Panc1 (cell line): ENCODE measurements at regions of chr9 and their contacts with region 1.

Region 1: GRCh38 chr9:29439961-29440360 is 1866.7 kb upstream of the C9orf72 start:
- DNase-seq: no peak
- ATAC-seq: no peak
- H3K4me3 ChIP-seq: no peak overlapping the region
- H3K27ac ChIP-seq: no peak overlapping the region
- H3K4me1 ChIP-seq: no peaks in the 10 kb centered on the region
- H3K27me3 ChIP-seq: no peaks in the 10 kb centered on the region
- CTCF ChIP-seq: no peak

Region 2: GRCh38 chr9:28249424-28249823 is 1190.5 kb before region 1 on chr9:
- CTCF ChIA-PET with region 1: no interaction called
- POLR2A ChIA-PET with region 1: no interaction called
- in situ Hi-C with region 1: no loop called
- intact Hi-C with region 1: no loop called
- DNase-seq: no peak
- ATAC-seq: no peak
- H3K4me3 ChIP-seq: no peak overlapping the region
- H3K27ac ChIP-seq: no peak overlapping the region
- H3K4me1 ChIP-seq: no peaks in the 10 kb centered on the region
- H3K27me3 ChIP-seq: no peaks in the 10 kb centered on the region
- CTCF ChIP-seq: no peak

Region 3: DNA sequence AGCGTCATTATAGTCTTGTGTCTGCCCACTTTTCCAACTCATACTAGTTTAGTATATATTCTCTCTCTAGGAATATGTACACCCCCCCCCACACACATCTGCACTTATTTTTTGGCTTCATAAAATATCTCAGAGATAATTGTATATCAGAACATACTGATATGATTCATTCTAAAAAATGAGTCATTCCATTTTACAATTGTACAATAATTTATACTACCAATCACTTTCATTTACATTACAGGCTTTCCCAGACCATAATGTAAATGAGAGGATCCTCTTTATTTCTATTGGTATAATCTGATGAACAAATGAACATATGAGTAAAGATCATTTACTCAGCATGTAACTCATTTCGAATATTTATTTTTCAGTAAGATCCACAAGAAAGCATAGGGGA is 23.8 kb before region 1 on chr9:
- CTCF ChIA-PET with region 1: no interaction called
- POLR2A ChIA-PET with region 1: no interaction called
- in situ Hi-C with region 1: no loop called
- intact Hi-C with region 1: no loop called
- DNase-seq: no peak
- ATAC-seq: no peak
- H3K4me3 ChIP-seq: no peak overlapping the region
- H3K27ac ChIP-seq: no peak overlapping the region
- H3K4me1 ChIP-seq: no peaks in the 10 kb centered on the region
- H3K27me3 ChIP-seq: no peaks in the 10 kb centered on the region
- CTCF ChIP-seq: no peak

Region 4: GRCh38 chr9:29575219-29575618 is 135.3 kb after region 1 on chr9:
- CTCF ChIA-PET with region 1: no interaction called
- POLR2A ChIA-PET with region 1: no interaction called
- in situ Hi-C with region 1: no loop called
- intact Hi-C with region 1: loop called (anchors 10 kb)
- DNase-seq: no peak
- ATAC-seq: no peak
- H3K4me3 ChIP-seq: no peak overlapping the region
- H3K27ac ChIP-seq: no peak overlapping the region
- H3K4me1 ChIP-seq: no peaks in the 10 kb centered on the region
- H3K27me3 ChIP-seq: no peaks in the 10 kb centered on the region
- CTCF ChIP-seq: no peak